WTC11 (cell line): ENCODE measurements at regions of chr6 and their contacts with region 1.

Region 1: GRCh38 chr6:32838114-32838958 is at the start of gene TAP2:
- DNase-seq: peak; percentile 97
- ATAC-seq: peak; percentile 88
- H3K4me3 Mint-ChIP-seq: peak within 1 kb of the TSS; percentile 72
- H3K27ac Mint-ChIP-seq: no peak within 1 kb of the TSS
- H3K4me1 Mint-ChIP-seq: peaks cover 17% of the 10 kb centered on the region
- H3K27me3 Mint-ChIP-seq: peaks cover 55% of the 10 kb centered on the region
- CTCF ChIP-seq: peak; percentile 85
- total RNA-seq, gene TAP2: 14.7 to 23.0 TPM (median 16.5 TPM) in 3 replicates

Region 2: GRCh38 chr6:32819729-32820128 is 18.6 kb before region 1 on chr6:
- CTCF ChIA-PET with region 1: interaction called, 10 read pairs
- POLR2A ChIA-PET with region 1: interaction called, 3 read pairs
- DNase-seq: no peak
- ATAC-seq: no peak
- H3K4me3 Mint-ChIP-seq: no peak overlapping the region
- H3K27ac Mint-ChIP-seq: no peak overlapping the region
- H3K4me1 Mint-ChIP-seq: no peaks in the 10 kb centered on the region
- H3K27me3 Mint-ChIP-seq: peaks cover 4% of the 10 kb centered on the region
- CTCF ChIP-seq: no peak

Region 3: DNA sequence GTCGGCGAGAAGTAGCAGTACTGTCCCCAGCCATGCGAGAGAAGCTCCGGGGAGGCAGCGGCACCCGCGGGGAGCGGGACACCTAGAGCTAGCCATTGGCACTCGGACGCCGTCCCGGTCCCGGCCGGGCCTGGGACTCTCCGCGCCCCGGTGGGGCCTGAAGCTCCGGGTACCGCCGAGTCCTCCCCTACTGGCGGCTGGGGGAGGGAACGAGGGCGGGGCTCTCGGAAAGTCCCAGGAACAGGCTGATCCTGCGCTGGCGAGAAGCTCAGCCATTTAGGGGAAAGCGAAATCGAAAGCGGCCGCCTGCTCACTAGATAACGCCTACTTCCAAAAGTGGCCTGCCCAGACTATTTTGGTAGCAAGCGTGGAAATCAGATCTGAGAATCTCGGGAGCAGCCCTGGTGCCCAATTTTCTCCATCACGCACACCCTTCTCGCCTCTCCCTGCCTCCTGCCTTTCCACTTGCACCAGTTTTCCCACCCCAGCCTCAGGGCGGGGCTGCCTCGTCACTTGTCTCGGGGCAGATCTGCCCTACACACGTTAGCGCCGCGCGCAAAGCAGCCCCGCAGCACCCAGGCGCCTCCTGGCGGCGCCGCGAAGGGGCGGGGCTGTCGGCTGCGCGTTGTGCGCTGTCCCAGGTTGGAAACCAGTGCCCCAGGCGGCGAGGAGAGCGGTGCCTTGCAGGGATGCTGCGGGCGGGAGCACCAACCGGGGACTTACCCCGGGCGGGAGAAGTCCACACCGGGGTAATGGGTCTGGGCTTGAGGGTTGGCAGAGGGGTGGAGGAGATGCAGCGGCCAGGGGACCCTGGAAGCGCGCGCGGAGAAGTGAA is 15.4 kb after region 1 on chr6 and contains the starts of genes PSMB9 and TAP1:
- CTCF ChIA-PET with region 1: interaction called, 291 read pairs
- POLR2A ChIA-PET with region 1: interaction called, 16 read pairs
- DNase-seq: peak; percentile 94
- ATAC-seq: peak; percentile 91
- H3K4me3 Mint-ChIP-seq: peak within 1 kb of the TSS; percentile 88
- H3K27ac Mint-ChIP-seq: peak within 1 kb of the TSS; percentile 90
- H3K4me1 Mint-ChIP-seq: peaks cover 14% of the 10 kb centered on the region
- H3K27me3 Mint-ChIP-seq: peaks cover 91% of the 10 kb centered on the region
- CTCF ChIP-seq: 0 out of 2 replicates have a peak, but pooled peaks have one; percentile 31
- total RNA-seq, gene PSMB9: 1.8 to 4.3 TPM (median 4.0 TPM) in 3 replicates
- total RNA-seq, gene TAP1: 13.6 to 15.9 TPM (median 15.7 TPM) in 3 replicates

Region 4: DNA sequence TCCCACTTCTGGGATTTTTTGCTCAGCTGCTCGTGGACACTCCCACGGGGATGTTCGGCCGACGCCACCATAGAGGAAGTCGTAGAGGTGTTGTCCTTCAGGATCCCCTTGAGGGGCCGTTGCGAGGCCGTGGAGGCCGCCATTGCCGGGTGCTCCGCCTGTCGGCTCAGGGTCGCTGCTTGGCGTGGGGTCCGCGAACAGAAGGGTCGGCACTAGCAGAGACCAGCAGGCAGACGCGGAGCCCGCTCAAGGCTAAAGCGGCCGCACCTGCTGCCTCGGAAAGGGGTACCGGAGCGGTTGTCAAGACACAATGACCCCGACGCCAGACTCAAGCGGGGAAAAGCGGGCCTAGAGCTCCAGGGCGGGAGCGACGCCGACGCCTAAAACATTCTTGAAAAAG is 41.4 kb after region 1 on chr6:
- CTCF ChIA-PET with region 1: interaction called, 10 read pairs
- POLR2A ChIA-PET with region 1: no interaction called
- DNase-seq: no peak
- ATAC-seq: no peak
- H3K4me3 Mint-ChIP-seq: no peak overlapping the region
- H3K27ac Mint-ChIP-seq: no peak overlapping the region
- H3K4me1 Mint-ChIP-seq: no peaks in the 10 kb centered on the region
- H3K27me3 Mint-ChIP-seq: peaks cover 12% of the 10 kb centered on the region
- CTCF ChIP-seq: no peak

Region 5: DNA sequence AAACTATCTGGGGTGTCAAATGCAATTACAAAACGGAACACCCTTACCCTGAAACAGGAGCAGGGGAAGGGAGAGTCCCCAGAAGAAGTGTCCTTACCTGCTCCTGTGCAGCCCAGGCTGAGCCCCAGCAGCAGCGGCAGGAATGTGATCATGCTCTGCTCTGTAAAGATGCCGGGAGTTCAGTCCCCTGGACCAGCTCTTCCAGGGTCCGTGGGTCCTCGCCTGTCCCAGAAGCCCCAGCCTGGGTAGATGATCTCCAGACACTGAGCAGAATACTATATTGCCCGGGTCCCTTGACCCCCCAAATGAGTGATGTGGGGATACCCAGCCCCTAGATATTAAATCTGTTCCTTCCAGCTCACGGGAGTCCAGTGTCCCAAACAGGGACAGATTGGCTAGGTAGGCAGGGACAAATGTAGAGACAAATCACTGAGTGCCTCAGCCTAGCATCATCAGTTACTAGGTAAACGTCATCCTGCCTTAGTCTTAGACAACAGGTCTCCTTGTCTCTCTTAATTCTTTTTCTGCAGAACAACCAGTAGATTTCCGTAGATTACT is 102.4 kb after region 1 on chr6 and contains the start of gene HLA-DMB:
- CTCF ChIA-PET with region 1: interaction called, 15 read pairs
- POLR2A ChIA-PET with region 1: no interaction called
- DNase-seq: peak; percentile 23
- ATAC-seq: peak; percentile 97
- H3K4me3 Mint-ChIP-seq: peak within 1 kb of the TSS; percentile 60
- H3K27ac Mint-ChIP-seq: peak within 1 kb of the TSS; percentile 67
- H3K4me1 Mint-ChIP-seq: peaks cover 13% of the 10 kb centered on the region
- H3K27me3 Mint-ChIP-seq: peaks cover 17% of the 10 kb centered on the region
- CTCF ChIP-seq: no peak
- total RNA-seq, gene HLA-DMB: 1.1 to 2.7 TPM (median 2.3 TPM) in 3 replicates

Region 6: GRCh38 chr6:32971581-32972352 is 133.4 kb after region 1 on chr6:
- CTCF ChIA-PET with region 1: interaction called, 28 read pairs
- POLR2A ChIA-PET with region 1: interaction called, 12 read pairs
- DNase-seq: peak; percentile 99
- ATAC-seq: peak; percentile 56
- H3K4me3 Mint-ChIP-seq: peak overlapping the region; percentile 98
- H3K27ac Mint-ChIP-seq: peak overlapping the region; percentile 100
- H3K4me1 Mint-ChIP-seq: peaks cover 32% of the 10 kb centered on the region
- H3K27me3 Mint-ChIP-seq: peaks cover 4% of the 10 kb centered on the region; the same call in 1 of the 2 replicates
- CTCF ChIP-seq: no peak